ENCODE measurements at regions of chr17 and their contacts with region 1.

Region 1: DNA sequence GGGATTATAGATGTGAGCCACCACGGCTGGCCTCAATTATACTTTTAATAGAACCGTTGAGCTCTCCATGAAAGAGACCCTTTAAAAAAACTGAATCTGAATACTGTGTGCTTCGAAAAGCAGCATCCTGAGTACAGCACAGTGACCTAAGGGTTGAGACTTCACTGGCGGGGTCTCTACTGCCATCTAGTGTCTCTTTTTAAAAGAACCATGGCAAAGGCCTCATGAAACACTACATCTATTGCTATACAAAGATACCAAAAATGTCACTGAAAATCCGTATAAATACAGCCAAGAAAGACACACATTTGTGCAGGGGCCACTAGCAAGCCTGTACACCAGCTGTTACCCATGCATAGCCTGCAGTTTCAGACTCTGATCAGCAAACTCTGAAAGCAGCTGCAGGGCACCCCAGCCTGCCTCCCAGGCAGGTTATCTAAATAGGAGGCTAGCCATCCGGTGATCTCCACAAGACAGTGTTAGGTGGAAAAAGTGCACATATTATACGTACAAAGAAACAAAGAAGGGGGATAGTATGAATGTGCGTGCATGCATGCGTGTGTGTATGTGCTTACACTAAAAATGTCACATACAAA is 35.3 kb downstream of the NPLOC4 start:
- DNase-seq: peak in 1 of 2 donors; percentile 81
- ATAC-seq: peak; percentile 87 to 97 (median 95)
- H3K4me3 ChIP-seq: no peak overlapping the region
- H3K4me3 Mint-ChIP-seq: no peak overlapping the region
- H3K27ac ChIP-seq: no peak overlapping the region
- H3K27ac Mint-ChIP-seq: peak overlapping the region; percentile 8 to 50
- H3K4me1 ChIP-seq: peaks cover 3% of the 10 kb centered on the region
- H3K4me1 Mint-ChIP-seq: peaks cover 7 to 20% of the 10 kb centered on the region in 2 donors
- H3K27me3 ChIP-seq: no peaks in the 10 kb centered on the region
- H3K27me3 Mint-ChIP-seq: no peaks in the 10 kb centered on the region
- CTCF ChIP-seq: peak; percentile 89

Region 2: DNA sequence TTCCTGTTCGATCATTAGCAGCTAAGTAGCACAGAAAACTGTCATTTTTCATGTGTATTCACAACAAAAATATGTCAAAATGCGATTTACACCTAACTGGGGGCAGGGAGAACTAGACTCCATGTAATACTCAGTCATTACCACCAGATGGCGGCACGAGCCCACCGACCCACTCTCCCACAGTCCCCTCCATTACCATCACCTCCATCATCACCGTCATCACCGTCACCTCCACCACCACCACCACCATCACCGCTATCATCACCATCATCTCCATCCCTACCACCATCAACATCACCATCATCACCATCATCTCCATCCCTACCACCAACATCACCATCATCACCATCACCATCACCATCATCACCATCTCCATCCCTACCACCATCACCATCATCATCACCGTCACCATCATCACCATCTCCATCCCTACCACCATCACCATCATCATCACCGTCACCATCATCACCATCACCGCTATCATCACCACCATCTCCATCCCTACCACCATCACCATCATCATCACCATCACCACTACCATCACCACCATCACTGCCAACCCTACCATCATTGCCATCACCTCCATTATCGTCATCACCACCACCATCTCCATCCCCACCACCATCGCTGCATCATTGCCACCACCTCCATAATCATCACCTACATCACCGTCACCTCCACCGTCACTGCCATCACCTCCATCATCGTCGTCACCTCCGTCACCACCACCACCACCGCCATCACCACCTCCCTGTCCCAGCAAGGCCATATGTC is 348.1 kb before region 1 on chr17:
- intact Hi-C with region 1: loop called (anchors 1 kb)
- DNase-seq: peak; percentile 56 to 83
- ATAC-seq: peak; percentile 65 to 85 (median 78)
- H3K4me3 ChIP-seq: no peak overlapping the region
- H3K4me3 Mint-ChIP-seq: peak overlapping the region; percentile 66
- H3K27ac ChIP-seq: no peak overlapping the region
- H3K27ac Mint-ChIP-seq: peak overlapping the region; percentile 58 to 71
- H3K4me1 ChIP-seq: peaks cover 21% of the 10 kb centered on the region
- H3K4me1 Mint-ChIP-seq: peaks cover 25 to 28% of the 10 kb centered on the region in 2 donors
- H3K27me3 ChIP-seq: no peaks in the 10 kb centered on the region
- H3K27me3 Mint-ChIP-seq: no peaks in the 10 kb centered on the region
- CTCF ChIP-seq: peak; percentile 77